ENCODE measurements at regions of chr2 and their contacts with region 1.

Region 1: DNA sequence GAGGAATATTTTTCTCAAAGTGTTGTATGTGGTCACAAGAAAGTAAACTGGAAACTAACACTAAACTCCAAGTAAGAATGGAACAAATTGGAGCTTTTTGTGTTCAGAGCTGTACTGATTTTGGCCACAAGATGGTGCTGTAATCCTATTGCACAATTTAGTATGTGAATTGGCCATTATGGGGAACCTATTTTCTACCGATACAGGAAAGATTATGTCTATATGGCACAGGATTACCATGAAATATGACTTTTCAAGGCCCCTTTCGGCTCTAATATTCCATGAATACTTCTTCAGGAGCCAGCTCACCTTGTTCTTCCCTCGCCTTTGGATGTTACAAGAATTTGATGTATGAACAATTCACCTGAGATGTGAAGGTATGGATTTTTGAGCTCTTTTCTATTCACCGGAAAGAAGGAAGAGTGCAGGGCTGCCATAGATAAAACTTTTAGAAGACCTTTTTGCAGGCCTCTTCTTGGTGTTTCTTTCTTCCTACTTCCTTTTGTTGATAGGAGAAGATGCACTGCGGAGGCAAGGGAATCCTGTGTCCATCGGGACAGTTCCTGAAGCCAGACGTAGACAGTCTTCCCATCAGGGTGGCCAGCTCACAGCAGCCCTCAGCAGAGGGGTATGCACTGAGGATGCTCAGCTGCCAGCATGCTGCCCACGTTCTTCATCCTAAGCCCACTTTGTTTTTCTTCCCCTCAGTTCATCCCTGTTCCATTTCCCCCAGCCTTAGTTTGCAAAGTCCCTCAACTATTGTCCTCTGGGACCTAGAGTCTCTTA is 13.3 kb downstream of the MRPL44 start:
- DNase-seq: peak; percentile 64 to 65
- H3K4me3 ChIP-seq: no peak overlapping the region
- H3K27ac ChIP-seq: no peak overlapping the region
- H3K4me1 ChIP-seq: no peaks in the 10 kb centered on the region
- H3K27me3 ChIP-seq: no peaks in the 10 kb centered on the region
- CTCF ChIP-seq: peak; percentile 100

Region 2: DNA sequence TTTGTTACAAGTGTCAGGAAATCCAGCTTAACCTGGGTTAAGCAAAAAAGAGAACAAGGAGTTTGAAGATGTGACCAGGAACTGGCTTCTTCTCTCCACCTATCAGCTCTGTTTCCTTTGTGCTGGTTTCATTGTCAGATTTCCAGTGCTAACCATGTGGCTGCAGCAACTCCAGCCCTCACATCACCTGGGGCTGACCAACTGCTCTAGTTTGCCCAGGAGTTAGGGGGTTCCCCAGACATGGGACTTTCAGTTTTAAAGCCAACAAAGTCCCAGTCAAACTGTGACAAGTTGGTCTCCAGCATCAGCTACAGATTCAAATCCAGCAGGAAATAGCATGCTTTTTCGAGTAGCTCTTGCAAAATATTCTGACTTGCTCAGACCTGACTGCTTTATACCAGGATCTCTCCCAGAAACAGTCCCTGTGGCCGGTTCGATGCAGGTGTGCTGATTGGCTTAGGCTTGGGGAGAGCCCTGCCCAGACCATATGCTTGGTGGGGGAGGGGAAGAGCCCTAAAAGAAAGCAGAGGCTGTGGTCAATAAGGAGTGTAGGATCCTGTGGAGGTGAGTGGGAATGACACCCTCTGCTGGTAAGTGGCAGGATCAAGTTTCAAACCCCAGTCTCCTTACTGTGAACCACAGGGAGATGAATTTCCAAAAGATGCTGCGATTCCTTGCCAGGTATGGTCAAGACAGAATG is 869.0 kb before region 1 on chr2:
- CTCF ChIA-PET with region 1: no interaction called
- POLR2A ChIA-PET with region 1: no interaction called
- intact Hi-C with region 1: no loop called
- DNase-seq: peak in 1 of 2 experiments; percentile 51
- H3K4me3 ChIP-seq: no peak overlapping the region
- H3K27ac ChIP-seq: no peak overlapping the region
- H3K4me1 ChIP-seq: peaks cover 5% of the 10 kb centered on the region; the same call in 1 of the 2 replicates
- H3K27me3 ChIP-seq: no peaks in the 10 kb centered on the region
- CTCF ChIP-seq: peak; percentile 86

Region 3: GRCh38 chr2:223727562-223727961 is 243.0 kb before region 1 on chr2:
- CTCF ChIA-PET with region 1: interaction called, 12 read pairs
- POLR2A ChIA-PET with region 1: no interaction called
- intact Hi-C with region 1: no loop called
- DNase-seq: peak; percentile 39 to 73
- H3K4me3 ChIP-seq: no peak overlapping the region
- H3K27ac ChIP-seq: no peak overlapping the region
- H3K4me1 ChIP-seq: peaks cover 19% of the 10 kb centered on the region
- H3K27me3 ChIP-seq: no peaks in the 10 kb centered on the region
- CTCF ChIP-seq: peak; percentile 73

Region 4: GRCh38 chr2:224039124-224039940 is 68.8 kb after region 1 on chr2 and contains the start of gene SERPINE2:
- CTCF ChIA-PET with region 1: no interaction called
- POLR2A ChIA-PET with region 1: no interaction called
- intact Hi-C with region 1: loop called (anchors 1 kb)
- DNase-seq: peak; percentile 67 to 91
- H3K4me3 ChIP-seq: peak within 1 kb of the TSS; percentile 57
- H3K27ac ChIP-seq: no peak within 1 kb of the TSS
- H3K4me1 ChIP-seq: peaks cover 20% of the 10 kb centered on the region
- H3K27me3 ChIP-seq: no peaks in the 10 kb centered on the region
- CTCF ChIP-seq: peak; percentile 77
- total RNA-seq, gene SERPINE2: 110 and 155 TPM in 2 replicates

Region 5: DNA sequence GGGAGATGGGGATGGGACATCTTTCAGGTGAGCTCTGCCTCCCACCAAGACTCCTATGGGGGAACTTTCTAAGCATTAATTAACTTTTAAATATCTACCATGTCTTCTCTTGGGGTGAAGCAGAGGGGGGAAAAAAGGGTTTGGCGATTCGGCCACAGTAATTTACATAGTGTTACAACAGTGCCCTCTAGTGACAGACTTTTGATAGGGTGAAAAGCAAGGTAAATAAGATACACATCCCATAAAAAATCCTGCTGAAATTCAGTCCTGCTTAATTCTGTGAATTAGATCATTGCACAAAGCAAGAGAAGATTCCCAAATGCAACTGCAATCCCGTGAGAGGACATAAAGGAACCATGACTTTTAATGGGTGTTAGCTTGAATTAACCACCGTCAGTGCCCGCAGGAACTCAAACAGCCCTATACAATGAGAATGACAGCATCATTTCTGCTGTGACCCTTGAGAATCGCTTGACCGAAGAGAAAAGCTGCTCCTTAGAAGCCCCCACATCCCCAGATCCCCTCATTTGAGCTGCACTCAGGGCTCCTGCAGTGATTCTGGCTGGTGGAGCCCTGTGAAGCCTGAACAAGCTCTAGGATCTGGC is 398.6 kb after region 1 on chr2:
- CTCF ChIA-PET with region 1: interaction called, 11 read pairs
- POLR2A ChIA-PET with region 1: no interaction called
- intact Hi-C with region 1: no loop called
- DNase-seq: peak; percentile 40 to 50
- H3K4me3 ChIP-seq: no peak overlapping the region
- H3K27ac ChIP-seq: no peak overlapping the region
- H3K4me1 ChIP-seq: no peaks in the 10 kb centered on the region
- H3K27me3 ChIP-seq: no peaks in the 10 kb centered on the region
- CTCF ChIP-seq: peak; percentile 97

Region 6: DNA sequence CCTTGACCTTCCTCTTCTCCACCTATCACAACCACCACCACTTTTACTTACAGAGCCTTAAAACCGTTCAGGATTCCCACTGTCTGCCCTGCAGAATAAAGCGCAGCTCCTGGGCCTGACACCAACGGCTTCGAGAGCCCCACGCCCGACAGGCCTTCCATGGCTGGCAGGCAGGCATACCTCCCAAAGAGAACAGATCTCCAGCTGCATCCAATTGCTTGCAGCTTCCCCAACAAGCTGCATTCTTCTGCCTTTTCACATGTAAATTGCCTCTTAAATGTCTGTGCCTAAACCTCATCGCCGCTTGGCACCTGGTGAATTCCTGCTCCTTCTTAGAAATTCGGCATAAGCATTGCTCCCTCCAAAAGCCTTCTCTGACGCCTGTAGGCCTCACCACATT is 462.9 kb after region 1 on chr2:
- CTCF ChIA-PET with region 1: no interaction called
- POLR2A ChIA-PET with region 1: no interaction called
- intact Hi-C with region 1: no loop called
- DNase-seq: no peak
- H3K4me3 ChIP-seq: no peak overlapping the region
- H3K27ac ChIP-seq: no peak overlapping the region
- H3K4me1 ChIP-seq: peaks cover 14% of the 10 kb centered on the region
- H3K27me3 ChIP-seq: no peaks in the 10 kb centered on the region
- CTCF ChIP-seq: no peak

Region 7: DNA sequence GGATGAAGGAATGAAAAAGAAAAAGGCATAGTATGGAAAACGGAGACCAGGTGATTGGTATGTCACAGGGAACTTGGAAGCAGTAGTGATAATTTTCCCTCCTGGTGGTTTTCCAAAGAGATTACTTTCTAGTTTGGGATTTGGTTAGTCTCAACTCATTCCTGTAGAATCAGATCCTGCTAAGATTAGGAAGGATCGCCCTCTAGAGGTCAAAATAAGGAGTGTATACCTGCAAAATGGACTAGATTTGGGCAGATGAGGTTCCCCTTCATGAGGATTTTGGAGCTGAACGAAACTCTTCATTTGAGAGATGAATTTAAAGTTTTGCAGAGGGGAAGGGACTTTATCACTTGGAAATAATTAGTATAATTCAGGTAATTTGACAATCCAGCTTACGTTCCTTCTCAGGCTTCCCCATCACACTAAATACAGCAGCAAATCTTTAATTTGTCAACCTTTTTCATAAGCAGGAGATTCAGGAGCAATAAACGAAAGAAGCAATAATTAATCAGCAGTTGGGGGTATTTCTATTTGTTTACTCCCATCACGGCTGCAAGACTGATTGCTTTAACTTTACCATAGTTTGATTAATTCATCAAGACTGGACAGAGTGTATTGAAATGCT is 680.4 kb after region 1 on chr2:
- CTCF ChIA-PET with region 1: interaction called, 9 read pairs
- POLR2A ChIA-PET with region 1: no interaction called
- intact Hi-C with region 1: loop called (anchors 1 kb)
- DNase-seq: peak; percentile 43 to 75
- H3K4me3 ChIP-seq: no peak overlapping the region
- H3K27ac ChIP-seq: no peak overlapping the region
- H3K4me1 ChIP-seq: peaks cover 6% of the 10 kb centered on the region
- H3K27me3 ChIP-seq: no peaks in the 10 kb centered on the region
- CTCF ChIP-seq: peak; percentile 100

Region 8: GRCh38 chr2:225002039-225002655 is 1031.6 kb after region 1 on chr2:
- CTCF ChIA-PET with region 1: no interaction called
- POLR2A ChIA-PET with region 1: no interaction called
- intact Hi-C with region 1: loop called (anchors 10 kb)
- DNase-seq: peak in 1 of 2 experiments; percentile 48
- H3K4me3 ChIP-seq: no peak overlapping the region
- H3K27ac ChIP-seq: no peak overlapping the region
- H3K4me1 ChIP-seq: no peaks in the 10 kb centered on the region
- H3K27me3 ChIP-seq: 0 out of 2 replicates have a peak, but pooled peaks cover 3% of the 10 kb centered on the region
- CTCF ChIP-seq: peak; percentile 93

Measured in PC-9 (cell line).